Dendritic cell treated with granulocyte-macrophage colony-stimulating factor and Interleukin-4, amounts not matched to agents 40 ng/mL and 50 ng/mL, for 4 days (primary cell): ENCODE measurements at regions of chr7 and their contacts with region 1.

Region 1: GRCh38 chr7:139777948-139778841 is at the start of gene HIPK2:
- H3K4me3 Mint-ChIP-seq: peak within 1 kb of the TSS; percentile 97
- H3K27ac Mint-ChIP-seq: peak within 1 kb of the TSS; percentile 92
- H3K4me1 Mint-ChIP-seq: peaks cover 36% of the 10 kb centered on the region
- H3K27me3 Mint-ChIP-seq: peaks cover 28% of the 10 kb centered on the region

Region 2: GRCh38 chr7:139829025-139829774 is 51.0 kb after region 1 on chr7 and contains the start of gene TBXAS1:
- intact Hi-C with region 1: loop called (anchors 5 kb)
- H3K4me3 Mint-ChIP-seq: peak within 1 kb of the TSS; percentile 87
- H3K27ac Mint-ChIP-seq: peak within 1 kb of the TSS; percentile 95
- H3K4me1 Mint-ChIP-seq: peaks cover 52% of the 10 kb centered on the region
- H3K27me3 Mint-ChIP-seq: peaks cover 8% of the 10 kb centered on the region

Region 3: GRCh38 chr7:139860090-139860775 is 82.0 kb after region 1 on chr7:
- intact Hi-C with region 1: loop called (anchors 5 kb)
- H3K4me3 Mint-ChIP-seq: peak overlapping the region; percentile 48
- H3K27ac Mint-ChIP-seq: peak overlapping the region; percentile 93
- H3K4me1 Mint-ChIP-seq: peaks cover 59% of the 10 kb centered on the region
- H3K27me3 Mint-ChIP-seq: no peaks in the 10 kb centered on the region

Region 4: DNA sequence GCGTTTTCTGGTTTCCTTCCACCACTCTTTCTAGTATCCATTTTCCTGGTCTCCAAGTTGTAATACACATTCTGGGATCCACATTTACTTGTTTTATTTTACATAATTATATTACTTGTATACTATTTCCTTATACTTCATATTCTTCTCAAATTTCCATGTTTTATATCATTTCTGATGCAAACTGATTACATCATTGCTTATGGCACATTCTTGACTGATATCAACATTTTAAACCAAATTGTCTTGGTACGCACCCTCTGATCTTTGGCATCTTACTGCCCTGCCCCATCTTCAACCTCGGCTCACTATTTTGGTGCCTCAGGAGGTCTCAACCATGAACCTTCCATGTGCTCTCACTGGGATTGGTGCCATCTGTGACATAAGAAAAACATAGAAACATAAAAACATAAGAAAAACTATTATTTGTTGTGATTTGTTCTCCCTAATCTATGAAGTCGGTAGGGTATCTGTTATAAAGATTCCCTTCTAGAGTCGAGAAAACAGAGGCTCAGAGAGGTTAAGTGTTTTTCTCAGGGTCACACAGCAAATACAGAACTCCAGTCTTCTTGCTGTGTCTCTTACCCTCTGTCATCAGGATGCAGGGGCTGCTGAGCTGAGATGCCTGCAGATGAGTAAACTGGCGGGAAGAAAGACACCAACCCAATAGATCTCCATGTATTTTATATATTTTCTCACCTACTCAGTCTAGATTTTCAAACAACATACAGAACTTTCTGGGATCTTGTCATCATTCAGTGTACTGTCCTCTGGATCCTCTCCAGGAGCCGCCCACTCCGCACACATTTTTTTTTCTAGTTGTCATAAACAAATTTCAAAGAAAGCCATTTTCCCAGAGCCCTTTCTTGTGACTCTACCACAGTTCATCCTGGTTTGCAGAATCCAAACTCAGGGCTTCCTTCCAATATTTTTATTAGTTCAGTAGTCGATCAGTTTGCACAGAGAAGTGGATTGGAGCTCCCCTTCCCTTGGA is 205.0 kb after region 1 on chr7:
- intact Hi-C with region 1: no loop called
- H3K4me3 Mint-ChIP-seq: no peak overlapping the region
- H3K27ac Mint-ChIP-seq: no peak overlapping the region
- H3K4me1 Mint-ChIP-seq: peaks cover 12% of the 10 kb centered on the region
- H3K27me3 Mint-ChIP-seq: no peaks in the 10 kb centered on the region

Region 5: DNA sequence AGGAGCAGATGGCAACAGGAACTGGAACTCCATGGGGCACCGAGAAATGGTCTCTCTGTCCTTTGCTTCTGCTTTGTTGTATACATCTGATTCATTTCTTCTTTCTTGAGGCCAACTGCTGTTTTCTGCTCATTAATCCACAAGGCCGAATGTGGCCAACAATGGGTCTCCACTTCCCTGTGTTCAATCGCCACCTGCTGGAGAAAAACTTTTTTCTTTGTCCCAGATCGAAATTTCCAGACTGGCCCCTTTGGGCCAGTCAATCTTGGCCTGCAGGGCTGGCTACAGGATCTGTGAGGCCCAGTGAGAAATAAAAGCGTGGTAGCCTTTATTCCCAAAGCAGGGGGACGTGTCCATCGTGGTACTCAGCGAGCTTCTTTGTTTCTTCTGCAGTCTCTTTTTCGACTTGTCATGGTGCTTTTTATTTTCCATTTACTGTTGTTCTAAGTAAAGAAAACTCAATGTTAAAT is 225.8 kb after region 1 on chr7:
- intact Hi-C with region 1: loop called (anchors 5 kb)
- H3K4me3 Mint-ChIP-seq: no peak overlapping the region
- H3K27ac Mint-ChIP-seq: no peak overlapping the region
- H3K4me1 Mint-ChIP-seq: peaks cover 20% of the 10 kb centered on the region
- H3K27me3 Mint-ChIP-seq: no peaks in the 10 kb centered on the region

Region 6: GRCh38 chr7:140074820-140075219 is 296.6 kb after region 1 on chr7:
- intact Hi-C with region 1: no loop called
- H3K4me3 Mint-ChIP-seq: no peak overlapping the region
- H3K27ac Mint-ChIP-seq: no peak overlapping the region
- H3K4me1 Mint-ChIP-seq: peaks cover 25% of the 10 kb centered on the region
- H3K27me3 Mint-ChIP-seq: peaks cover 5% of the 10 kb centered on the region

Region 7: GRCh38 chr7:140342727-140343514 is 564.7 kb after region 1 on chr7:
- intact Hi-C with region 1: loop called (anchors 10 kb)
- H3K4me3 Mint-ChIP-seq: no peak overlapping the region
- H3K27ac Mint-ChIP-seq: peak overlapping the region; percentile 69
- H3K4me1 Mint-ChIP-seq: peaks cover 18% of the 10 kb centered on the region
- H3K27me3 Mint-ChIP-seq: no peaks in the 10 kb centered on the region